Activated T-helper 2 cell treated with anti-CD3 and anti-CD28 coated beads, Interferon-gamma antibody, Interleukin-2, Interleukin-4, amounts not matched to agents 10 μg/mL and 5 μg/mL and 100 μg/mL, durations not matched to agents 14 hours and 24 hours and 36 hours (primary cell): ENCODE measurements at regions of chr3 and their contacts with region 1.

Region 1: DNA sequence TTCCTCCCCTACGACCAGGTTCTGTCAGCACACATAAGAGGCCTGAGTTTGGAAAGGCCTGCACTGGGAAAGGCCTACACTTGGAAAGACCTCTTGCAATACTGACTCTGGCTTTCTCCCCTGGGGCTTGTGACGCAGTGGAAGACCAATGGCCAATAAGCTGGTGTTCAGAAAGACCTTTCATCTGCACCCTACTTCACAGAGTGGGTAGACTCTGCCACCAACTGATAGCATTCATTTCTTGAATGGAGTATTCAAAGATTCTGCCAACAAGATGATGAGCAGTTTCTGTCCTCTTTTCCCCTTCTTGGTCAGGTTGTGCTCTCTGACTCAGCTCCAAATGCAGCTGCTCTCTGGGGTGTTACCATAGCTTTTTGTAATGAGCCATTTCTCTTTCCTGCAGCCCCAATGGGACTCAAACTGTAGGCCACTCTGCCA is 48.8 kb downstream of the TIPARP start:
- DNase-seq: no peak
- H3K4me3 Mint-ChIP-seq: no peak overlapping the region
- H3K27ac Mint-ChIP-seq: peak overlapping the region; percentile 26
- H3K4me1 Mint-ChIP-seq: peaks cover 27% of the 10 kb centered on the region
- H3K27me3 Mint-ChIP-seq: no peaks in the 10 kb centered on the region

Region 2: DNA sequence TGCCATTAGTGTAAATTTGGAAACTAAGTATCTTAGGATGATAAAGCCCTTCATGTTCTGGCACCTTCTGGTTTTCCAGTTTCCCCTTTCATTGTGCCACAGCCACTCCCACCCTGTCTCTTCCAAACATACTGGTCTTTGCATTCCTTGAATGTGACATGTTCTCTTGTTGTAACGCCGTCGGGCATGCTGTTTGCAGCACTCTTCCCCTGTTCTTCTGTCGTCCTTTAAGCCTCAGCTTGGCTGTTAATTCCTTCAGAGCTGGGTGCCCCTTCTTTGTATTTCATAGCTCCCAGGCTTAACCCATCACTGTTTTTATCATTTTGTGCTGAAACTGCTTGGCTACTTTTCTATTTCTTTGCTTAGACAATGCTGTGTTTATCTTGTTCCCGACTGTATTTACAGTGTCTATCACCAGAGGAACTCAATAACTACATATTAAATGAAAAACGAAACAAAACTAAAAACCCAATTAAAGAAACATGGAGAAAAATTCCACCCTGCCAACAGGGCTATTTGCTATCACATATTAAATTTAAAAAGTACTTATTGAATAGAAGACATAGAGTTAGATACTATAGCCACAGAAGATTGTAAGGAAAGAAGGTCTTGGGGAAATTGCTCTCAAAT is 698.2 kb before region 1 on chr3:
- intact Hi-C with region 1: no loop called
- DNase-seq: no peak
- H3K4me3 Mint-ChIP-seq: no peak overlapping the region
- H3K27ac Mint-ChIP-seq: no peak overlapping the region
- H3K4me1 Mint-ChIP-seq: no peaks in the 10 kb centered on the region
- H3K27me3 Mint-ChIP-seq: peaks cover 21% of the 10 kb centered on the region

Region 3: GRCh38 chr3:156685198-156685597 is 38.0 kb before region 1 on chr3:
- intact Hi-C with region 1: loop called (anchors 5 kb)
- DNase-seq: no peak
- H3K4me3 Mint-ChIP-seq: peak overlapping the region; percentile 48
- H3K27ac Mint-ChIP-seq: peak overlapping the region; percentile 54
- H3K4me1 Mint-ChIP-seq: peaks cover 76% of the 10 kb centered on the region
- H3K27me3 Mint-ChIP-seq: no peaks in the 10 kb centered on the region

Region 4: GRCh38 chr3:156742401-156742800 is 19.2 kb after region 1 on chr3:
- intact Hi-C with region 1: no loop called
- DNase-seq: no peak
- H3K4me3 Mint-ChIP-seq: no peak overlapping the region
- H3K27ac Mint-ChIP-seq: no peak overlapping the region
- H3K4me1 Mint-ChIP-seq: peaks cover 3% of the 10 kb centered on the region
- H3K27me3 Mint-ChIP-seq: no peaks in the 10 kb centered on the region